Panc1 (cell line): ENCODE measurements at regions of chr7 and their contacts with region 1.

Region 1: DNA sequence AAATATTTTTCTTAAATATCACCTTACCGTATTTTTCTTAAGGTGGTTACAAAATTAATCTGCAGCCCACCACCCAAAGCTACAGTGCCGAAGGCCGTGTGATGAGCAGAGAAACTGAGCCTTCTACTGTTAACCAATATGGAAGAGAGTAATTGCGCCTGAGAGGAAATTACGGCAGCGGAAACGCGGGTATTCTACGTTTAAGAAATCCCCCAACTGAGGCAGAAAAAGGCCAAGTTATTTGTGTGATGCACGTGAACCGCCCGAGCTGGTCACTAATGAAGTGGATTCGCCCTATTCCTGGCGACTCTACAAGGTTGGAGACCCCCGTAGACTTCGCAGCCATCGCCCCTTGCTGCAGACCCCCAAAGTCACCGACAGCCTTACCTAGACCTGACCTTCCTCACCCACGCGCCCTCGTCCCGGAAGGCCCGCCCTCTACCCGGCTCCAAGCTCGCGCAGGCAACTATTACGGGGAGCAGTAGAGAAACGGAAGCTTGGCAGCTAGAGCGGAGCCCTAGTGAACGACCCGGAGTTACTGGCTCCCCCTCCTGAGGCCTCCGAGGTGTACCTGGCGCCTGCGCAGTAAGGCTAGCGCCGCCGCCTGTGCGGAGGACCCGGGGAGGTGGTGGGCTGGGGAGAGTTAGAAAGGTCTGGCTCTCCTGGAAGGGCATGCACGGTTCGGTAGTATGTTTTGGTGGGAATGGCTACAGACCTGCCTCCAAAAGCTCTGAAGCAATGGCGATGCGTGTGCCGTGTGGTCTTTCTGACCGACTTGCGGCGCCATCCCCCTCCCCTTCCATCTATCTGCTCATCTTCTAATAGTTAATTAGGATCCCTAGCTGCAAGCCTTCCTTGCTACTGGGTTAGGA is at the start of gene MRPS33:
- DNase-seq: peak; percentile 90
- ATAC-seq: peak; percentile 100
- H3K4me3 ChIP-seq: peak within 1 kb of the TSS; percentile 93 to 95
- H3K27ac ChIP-seq: peak within 1 kb of the TSS; percentile 97
- H3K4me1 ChIP-seq: peaks cover 6% of the 10 kb centered on the region
- H3K27me3 ChIP-seq: peaks cover 9% of the 10 kb centered on the region; the same call in 1 of the 2 replicates
- CTCF ChIP-seq: peak; percentile 92
- total RNA-seq, gene MRPS33: 68.8 TPM

Region 2: DNA sequence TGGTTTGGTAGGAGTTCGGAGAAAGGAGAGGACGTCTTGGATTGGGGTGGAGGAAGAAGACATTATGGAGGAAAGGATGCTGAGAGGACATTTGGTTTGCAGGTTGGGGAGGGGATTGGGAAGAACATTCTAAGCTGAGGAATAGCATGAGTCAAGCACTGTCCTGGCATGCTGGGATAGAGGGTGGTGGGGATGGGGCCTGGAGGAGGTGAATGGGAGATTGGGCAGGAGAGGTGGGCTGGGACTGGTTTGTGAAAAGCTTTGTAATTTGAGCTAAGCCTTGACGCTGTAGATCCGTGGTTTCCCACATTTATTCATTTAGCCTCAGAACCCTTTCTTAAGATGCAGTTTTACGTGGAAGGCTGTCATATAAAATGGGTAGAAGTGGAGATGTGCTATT is 111.3 kb after region 1 on chr7:
- CTCF ChIA-PET with region 1: interaction called, 10 read pairs
- POLR2A ChIA-PET with region 1: no interaction called
- in situ Hi-C with region 1: no loop called
- intact Hi-C with region 1: no loop called
- DNase-seq: no peak
- ATAC-seq: no peak
- H3K4me3 ChIP-seq: no peak overlapping the region
- H3K27ac ChIP-seq: no peak overlapping the region
- H3K4me1 ChIP-seq: no peaks in the 10 kb centered on the region
- H3K27me3 ChIP-seq: peaks cover 2% of the 10 kb centered on the region; the same call in 1 of the 2 replicates
- CTCF ChIP-seq: no peak